ENCODE measurements at regions of chr10 and their contacts with region 1.

Region 1: DNA sequence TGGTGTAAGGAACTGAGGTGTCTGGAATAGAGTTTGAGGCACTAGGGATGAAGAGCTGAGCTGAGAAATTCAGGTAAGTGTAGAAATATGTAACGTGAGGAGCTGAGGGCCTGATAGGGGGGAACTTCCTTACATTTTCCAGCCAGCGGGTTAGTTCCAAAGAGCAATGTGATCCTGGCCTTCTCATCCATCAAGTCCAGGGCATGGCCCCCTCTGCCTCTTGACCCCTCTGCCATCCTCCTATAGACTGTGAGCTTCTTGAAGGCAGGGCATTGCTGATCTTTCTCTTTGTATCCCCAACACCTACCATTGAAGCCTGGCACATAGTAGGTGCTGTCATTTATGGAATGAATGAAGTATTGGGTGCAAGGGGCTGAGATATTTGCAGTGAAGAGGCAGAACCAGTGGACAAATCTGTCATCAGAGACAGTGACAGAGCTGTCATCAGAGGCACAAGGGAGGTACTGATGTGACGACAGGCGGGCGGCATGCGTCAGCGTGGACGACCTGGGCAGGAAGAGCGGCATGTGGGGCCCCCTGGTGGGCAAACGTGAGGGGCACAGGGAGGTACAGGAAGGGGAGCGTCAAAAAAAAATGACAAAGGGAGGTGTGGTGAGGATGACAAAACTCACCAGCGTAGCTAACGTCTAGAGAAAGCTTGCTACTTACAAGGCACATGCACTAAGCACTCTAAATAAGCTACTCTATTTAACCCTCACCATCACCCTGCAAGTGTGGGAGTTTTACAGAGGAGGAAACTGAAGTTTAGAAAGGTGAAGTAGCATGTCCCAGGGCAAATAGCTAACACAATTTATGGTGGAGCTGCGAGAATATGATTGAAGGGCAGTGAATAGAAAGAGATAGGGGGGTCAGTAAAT is 5.2 kb upstream of the CAMK2G start:
- DNase-seq: peak; percentile 97
- H3K4me3 Mint-ChIP-seq: no peak overlapping the region
- H3K27ac Mint-ChIP-seq: peak overlapping the region; percentile 50
- H3K4me1 Mint-ChIP-seq: peaks cover 43% of the 10 kb centered on the region
- H3K27me3 Mint-ChIP-seq: no peaks in the 10 kb centered on the region

Region 2: DNA sequence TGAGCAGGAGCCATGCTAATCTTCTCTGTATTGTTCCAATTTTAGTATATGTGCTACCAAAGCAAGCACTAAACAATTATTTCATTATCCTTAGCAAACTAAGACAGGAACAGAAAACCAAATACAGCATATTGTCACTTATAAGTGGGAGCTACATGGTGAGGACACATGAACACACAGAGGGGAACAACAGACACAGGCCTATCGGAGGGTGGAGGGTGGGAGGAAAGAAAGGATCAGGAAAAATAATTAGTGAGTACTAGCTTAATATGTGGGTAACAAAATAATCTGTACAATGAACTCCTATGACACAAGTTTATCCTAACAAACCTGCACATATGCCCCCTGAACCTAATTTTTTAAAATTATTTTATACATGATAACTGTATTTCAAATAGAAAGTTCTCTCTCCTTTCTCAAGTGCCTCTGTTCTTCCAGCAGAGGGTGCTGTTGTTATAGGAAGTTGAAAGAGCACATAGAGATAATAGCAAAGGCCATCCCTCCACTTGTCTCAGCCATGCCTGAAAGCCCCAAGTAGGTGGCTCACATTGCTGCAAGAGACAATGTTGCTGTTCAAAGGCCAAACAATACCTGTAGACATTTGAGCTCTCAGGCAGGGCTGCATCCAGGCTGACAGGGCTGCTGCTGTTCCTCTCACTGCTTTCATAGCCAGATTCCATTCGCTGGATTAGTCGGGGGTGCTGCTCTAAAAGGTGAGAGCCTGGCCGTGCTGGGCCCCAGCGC is 350.3 kb before region 1 on chr10:
- CTCF ChIA-PET with region 1: interaction called, 3 read pairs
- intact Hi-C with region 1: loop called (anchors 1 kb)
- DNase-seq: peak; percentile 60
- H3K4me3 Mint-ChIP-seq: no peak overlapping the region
- H3K27ac Mint-ChIP-seq: no peak overlapping the region
- H3K4me1 Mint-ChIP-seq: no peaks in the 10 kb centered on the region
- H3K27me3 Mint-ChIP-seq: no peaks in the 10 kb centered on the region

Region 3: GRCh38 chr10:73717556-73717955 is 162.0 kb before region 1 on chr10:
- CTCF ChIA-PET with region 1: no interaction called
- intact Hi-C with region 1: no loop called
- DNase-seq: no peak
- H3K4me3 Mint-ChIP-seq: no peak overlapping the region
- H3K27ac Mint-ChIP-seq: no peak overlapping the region
- H3K4me1 Mint-ChIP-seq: peaks cover 3% of the 10 kb centered on the region
- H3K27me3 Mint-ChIP-seq: no peaks in the 10 kb centered on the region

Region 4: GRCh38 chr10:73779539-73780197 is 99.9 kb before region 1 on chr10:
- CTCF ChIA-PET with region 1: no interaction called
- intact Hi-C with region 1: no loop called
- DNase-seq: no peak
- H3K4me3 Mint-ChIP-seq: peak overlapping the region; percentile 8
- H3K27ac Mint-ChIP-seq: peak overlapping the region; percentile 27
- H3K4me1 Mint-ChIP-seq: peaks cover 52% of the 10 kb centered on the region
- H3K27me3 Mint-ChIP-seq: no peaks in the 10 kb centered on the region

Region 5: GRCh38 chr10:73810735-73811465 is 68.6 kb before region 1 on chr10:
- CTCF ChIA-PET with region 1: interaction called, 16 read pairs
- intact Hi-C with region 1: loop called (anchors 1 kb)
- DNase-seq: peak; percentile 63
- H3K4me3 Mint-ChIP-seq: peak overlapping the region; percentile 93
- H3K27ac Mint-ChIP-seq: peak overlapping the region; percentile 99
- H3K4me1 Mint-ChIP-seq: peaks cover 47% of the 10 kb centered on the region
- H3K27me3 Mint-ChIP-seq: no peaks in the 10 kb centered on the region

Region 6: DNA sequence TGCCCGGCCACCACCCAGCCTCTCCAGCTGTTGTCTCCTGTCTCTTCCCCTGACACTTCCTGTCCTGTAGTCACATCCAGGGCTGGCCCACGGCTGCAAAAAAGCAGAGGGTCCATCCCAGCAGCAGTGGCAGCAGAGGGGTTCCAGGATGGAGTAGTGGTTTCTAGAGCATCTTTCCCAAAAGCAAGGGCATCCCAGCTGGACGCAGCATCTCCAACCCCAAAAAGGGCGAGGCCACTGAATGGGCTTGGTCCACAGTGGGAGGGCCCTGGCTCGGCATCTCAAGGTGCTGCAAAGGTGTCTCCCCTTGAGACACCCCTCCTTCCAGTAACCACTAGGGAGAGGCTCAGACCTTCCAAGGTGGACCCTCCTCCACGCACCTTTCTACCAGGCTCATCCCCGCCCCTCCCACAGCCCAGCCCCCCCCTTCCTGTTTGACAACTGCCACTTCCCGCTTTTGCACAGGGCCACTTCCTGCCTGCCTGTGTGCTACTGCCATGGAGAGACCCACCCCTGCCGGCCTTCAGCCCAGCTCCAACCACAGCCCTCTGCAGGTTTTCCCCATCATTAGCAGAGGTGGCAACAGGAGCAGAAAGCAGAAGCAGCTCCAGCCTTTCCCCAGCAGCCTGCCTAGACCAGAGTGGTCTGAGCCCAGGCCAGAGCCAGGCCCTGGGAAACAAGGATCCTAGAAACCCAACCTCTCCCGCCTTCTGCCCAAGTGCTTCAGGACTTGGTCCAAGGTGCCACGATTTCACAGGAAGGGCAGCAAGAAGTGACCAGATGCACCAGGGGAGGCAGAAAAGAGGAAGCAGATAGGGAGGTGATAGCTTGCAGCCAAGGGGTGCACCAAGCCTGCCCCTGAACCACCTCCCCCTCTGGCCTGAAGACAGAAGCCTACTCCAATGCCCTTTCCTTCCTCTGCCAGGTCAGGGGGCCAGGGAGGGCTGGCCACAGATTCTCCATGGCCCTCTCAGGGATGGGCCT is 13.8 kb before region 1 on chr10:
- CTCF ChIA-PET with region 1: interaction called, 164 read pairs
- intact Hi-C with region 1: loop called (anchors 1 kb)
- DNase-seq: peak; percentile 85
- H3K4me3 Mint-ChIP-seq: peak overlapping the region; percentile 76
- H3K27ac Mint-ChIP-seq: peak overlapping the region; percentile 95
- H3K4me1 Mint-ChIP-seq: peaks cover 73% of the 10 kb centered on the region
- H3K27me3 Mint-ChIP-seq: no peaks in the 10 kb centered on the region

Region 7: DNA sequence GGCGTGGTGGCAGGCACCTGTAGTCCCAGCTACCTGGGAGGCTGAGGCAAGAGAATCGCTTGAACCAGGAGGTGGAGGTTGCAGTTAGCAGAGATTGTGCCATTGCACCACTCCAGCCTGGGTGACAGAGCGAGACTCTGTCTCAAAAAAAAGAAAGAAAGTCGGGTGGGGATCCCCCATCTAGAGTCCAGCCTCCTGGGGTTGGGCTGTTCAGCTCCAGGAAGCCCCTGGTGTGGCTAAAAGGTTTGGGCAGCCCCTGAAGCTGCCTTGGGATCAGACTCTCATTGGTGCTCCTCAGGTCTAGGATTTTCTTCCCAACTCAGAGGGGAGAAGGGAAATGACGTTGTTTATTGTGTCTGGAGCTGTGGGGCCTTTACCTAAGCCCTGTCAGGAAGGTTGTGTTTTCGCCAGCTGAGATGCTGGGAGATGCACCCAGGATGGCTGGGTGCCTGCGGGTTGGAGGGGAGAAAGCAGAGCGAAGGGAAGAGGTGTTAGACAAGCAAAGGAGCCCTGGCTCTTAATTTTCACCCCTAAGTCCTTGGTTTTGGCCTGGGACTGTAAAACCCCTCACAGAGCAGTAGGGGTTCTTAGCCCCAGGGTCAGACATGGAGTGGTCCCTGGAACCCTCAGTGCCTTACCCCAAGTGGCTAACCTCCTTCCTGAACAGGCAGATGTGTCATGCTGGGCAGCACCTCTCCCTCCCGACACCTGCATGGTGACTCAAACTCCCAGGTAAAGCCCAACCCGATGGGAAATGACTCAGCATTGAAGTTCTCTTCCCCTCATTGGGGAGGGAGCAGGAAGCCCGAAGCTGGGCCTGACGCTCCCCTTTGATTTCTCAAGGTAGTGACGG is 52.5 kb after region 1 on chr10:
- CTCF ChIA-PET with region 1: interaction called, 396 read pairs
- intact Hi-C with region 1: no loop called
- DNase-seq: peak; percentile 92
- H3K4me3 Mint-ChIP-seq: no peak overlapping the region
- H3K27ac Mint-ChIP-seq: peak overlapping the region; percentile 83
- H3K4me1 Mint-ChIP-seq: peaks cover 15% of the 10 kb centered on the region
- H3K27me3 Mint-ChIP-seq: peaks cover 7% of the 10 kb centered on the region

Region 8: DNA sequence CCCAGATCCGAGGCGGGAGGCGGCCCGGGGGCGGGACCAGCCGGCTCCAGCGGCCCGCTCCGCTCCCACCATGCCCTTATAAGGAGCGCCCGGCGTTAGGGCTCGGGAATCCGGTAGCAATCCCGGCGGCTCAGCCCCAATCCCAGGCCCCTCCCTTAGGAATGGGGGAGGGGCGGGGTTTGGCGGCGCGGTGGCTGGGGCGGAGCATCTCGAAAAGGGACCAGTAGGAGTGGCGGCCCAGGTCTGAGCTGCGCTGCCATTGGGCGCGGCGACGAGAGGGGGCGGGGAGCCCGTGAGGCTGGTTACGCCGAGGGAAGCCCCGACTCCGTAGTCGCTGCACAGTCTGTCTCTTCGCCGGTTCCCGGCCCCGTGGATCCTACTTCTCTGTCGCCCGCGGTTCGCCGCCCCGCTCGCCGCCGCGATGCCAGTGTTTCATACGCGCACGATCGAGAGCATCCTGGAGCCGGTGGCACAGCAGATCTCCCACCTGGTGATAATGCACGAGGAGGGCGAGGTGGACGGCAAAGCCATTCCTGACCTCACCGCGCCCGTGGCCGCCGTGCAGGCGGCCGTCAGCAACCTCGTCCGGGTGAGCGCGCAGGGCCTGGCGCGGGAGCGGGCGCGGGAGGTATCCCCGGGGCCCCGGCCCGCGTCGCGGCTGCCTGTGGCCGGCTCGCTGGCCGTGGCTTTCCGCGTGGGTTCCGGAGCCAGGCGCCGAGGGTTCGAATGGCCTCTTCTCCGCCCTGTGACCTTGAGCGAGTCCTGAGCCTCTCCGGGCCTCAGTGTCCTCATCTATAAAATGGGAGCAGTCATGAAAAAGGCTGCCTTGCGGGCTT is 118.5 kb after region 1 on chr10 and contains the start of gene VCL:
- CTCF ChIA-PET with region 1: interaction called, 9 read pairs
- intact Hi-C with region 1: loop called (anchors 2 kb)
- DNase-seq: peak; percentile 96
- H3K4me3 Mint-ChIP-seq: peak within 1 kb of the TSS; percentile 86
- H3K27ac Mint-ChIP-seq: peak within 1 kb of the TSS; percentile 89
- H3K4me1 Mint-ChIP-seq: peaks cover 26% of the 10 kb centered on the region
- H3K27me3 Mint-ChIP-seq: no peaks in the 10 kb centered on the region
- total RNA-seq, gene VCL: 13.4 to 14.4 TPM

Measured in activated naive CD4-positive, alpha-beta T cell treated with anti-CD3 and anti-CD28 coated beads for 36 hours (primary cell).